K562 (cell line): ENCODE measurements at regions of chr7 and their contacts with region 1.

Region 1: DNA sequence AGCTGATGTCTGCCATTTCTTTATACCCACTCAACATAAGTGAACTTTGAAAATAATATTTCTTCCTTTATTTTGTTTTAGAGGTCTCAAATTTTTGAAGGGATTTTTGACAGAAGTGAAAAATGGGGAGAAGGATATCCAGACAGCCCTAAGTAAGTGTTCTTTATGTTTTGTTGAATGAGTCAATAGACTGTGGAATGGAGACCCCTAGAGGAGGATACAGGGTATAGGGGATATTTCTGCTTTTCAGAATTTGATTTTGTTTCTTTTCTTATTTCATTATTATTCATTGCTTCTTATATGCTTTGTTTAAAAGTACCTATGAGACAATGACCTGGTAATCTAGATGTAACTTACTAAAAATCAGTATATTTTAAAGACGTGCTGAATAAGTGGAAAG is 34.4 kb downstream of the PLEKHA8 start:
- DNase-seq: peak; percentile 52 to 57 (median 56)
- ATAC-seq: peak; percentile 93
- H3K4me3 ChIP-seq: no peak overlapping the region
- H3K27ac ChIP-seq: no peak overlapping the region
- H3K4me1 ChIP-seq: no peaks in the 10 kb centered on the region
- H3K27me3 ChIP-seq: no peaks in the 10 kb centered on the region
- CTCF ChIP-seq: peak; percentile 44 to 85 (median 52); a peak in 4 of 6 replicates
- EP300 ChIP-seq: no peak
- POLR2A ChIP-seq: no peak
- RAD21 ChIP-seq: peak; percentile 51 to 83

Region 2: DNA sequence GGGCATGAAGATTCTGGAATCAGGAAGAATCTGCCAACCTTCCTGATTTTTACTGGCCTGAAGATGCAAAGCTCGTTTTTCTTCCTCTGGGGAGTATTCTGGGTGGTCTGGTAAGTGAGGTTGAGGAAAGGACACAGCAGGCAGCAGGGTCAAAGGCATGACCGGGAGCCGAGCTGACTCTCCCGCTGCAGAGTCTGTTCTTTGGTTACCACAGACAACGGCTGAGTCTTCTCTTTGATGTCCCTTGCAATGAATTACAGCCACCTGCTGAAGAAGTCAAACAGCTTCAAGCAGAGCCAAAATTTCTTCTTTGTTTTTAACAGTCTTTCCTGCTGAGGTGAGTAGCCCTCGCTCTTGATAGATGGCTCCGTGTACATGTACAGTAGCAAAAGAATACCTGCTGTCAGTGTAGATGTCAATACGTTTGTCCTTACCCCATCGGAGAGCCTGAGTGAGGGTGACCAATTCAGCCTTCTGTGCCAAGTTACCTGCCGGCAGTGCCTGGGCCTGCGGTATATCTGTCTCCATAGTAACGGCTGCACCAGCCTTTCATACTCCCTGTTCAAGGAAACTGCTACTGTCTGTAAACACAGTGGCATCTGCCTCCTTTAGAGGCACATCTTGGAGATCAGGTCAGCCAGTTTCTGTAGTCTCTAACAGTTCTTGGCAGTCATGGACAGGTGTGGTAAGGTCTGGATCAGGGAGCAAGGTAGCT is 422.6 kb before region 1 on chr7:
- CTCF ChIA-PET with region 1: interaction called, 4 read pairs
- POLR2A ChIA-PET with region 1: no interaction called
- in situ Hi-C with region 1: loop called (anchors 10 kb)
- intact Hi-C with region 1: loop called (anchors 5 kb)
- DNase-seq: no peak
- ATAC-seq: no peak
- H3K4me3 ChIP-seq: no peak overlapping the region
- H3K27ac ChIP-seq: no peak overlapping the region
- H3K4me1 ChIP-seq: peaks cover 0 to 5% of the 10 kb centered on the region in 2 experiments; a peak in 1 of 5 replicates
- H3K27me3 ChIP-seq: no peaks in the 10 kb centered on the region
- CTCF ChIP-seq: no peak
- EP300 ChIP-seq: no peak
- POLR2A ChIP-seq: no peak
- RAD21 ChIP-seq: no peak

Region 3: DNA sequence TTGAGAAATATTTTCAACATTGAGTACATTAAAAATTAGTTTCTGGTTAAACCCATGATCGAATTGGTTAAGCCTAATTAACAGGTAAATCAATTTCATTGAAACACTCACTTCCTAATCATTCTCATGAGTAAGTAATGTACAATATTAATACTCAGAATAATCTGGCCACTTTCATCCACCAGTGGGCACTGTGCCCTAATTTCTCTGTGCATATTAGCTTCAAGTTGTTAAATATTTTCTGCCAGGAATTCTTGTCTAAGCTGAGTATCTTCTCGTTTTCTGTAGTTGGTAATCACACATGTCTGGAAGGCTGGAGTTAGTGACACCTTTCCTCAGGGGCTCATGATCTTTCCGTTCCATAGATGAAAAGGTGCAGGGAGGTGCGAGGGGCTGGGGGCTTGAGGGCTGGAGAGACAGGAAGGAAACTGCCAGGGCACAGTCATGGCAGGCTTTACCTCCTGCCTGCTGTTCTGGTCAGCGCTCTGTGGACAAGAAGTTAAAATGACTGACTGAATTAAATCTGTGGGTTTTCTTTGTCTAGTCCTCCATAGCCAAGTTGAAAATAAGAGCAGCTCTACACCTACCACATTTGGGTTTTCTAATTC is 184.4 kb before region 1 on chr7:
- CTCF ChIA-PET with region 1: interaction called, 3 read pairs
- POLR2A ChIA-PET with region 1: interaction called, 3 read pairs
- in situ Hi-C with region 1: loop called (anchors 10 kb)
- intact Hi-C with region 1: loop called (anchors 5 kb)
- DNase-seq: peak; percentile 20 to 39 (median 30)
- ATAC-seq: peak; percentile 58; the same call in 2 of the 3 replicates
- H3K4me3 ChIP-seq: no peak overlapping the region
- H3K27ac ChIP-seq: no peak overlapping the region
- H3K4me1 ChIP-seq: peaks cover 0 to 3% of the 10 kb centered on the region in 2 experiments; a peak in 1 of 5 replicates
- H3K27me3 ChIP-seq: no peaks in the 10 kb centered on the region
- CTCF ChIP-seq: peak; percentile 46 to 75 (median 50); a peak in 4 of 6 replicates
- EP300 ChIP-seq: no peak
- POLR2A ChIP-seq: no peak
- RAD21 ChIP-seq: peak; percentile 61 to 76

Region 4: GRCh38 chr7:29946428-29947186 is 116.0 kb before region 1 on chr7:
- CTCF ChIA-PET with region 1: no interaction called
- POLR2A ChIA-PET with region 1: interaction called, 3 read pairs
- in situ Hi-C with region 1: no loop called
- intact Hi-C with region 1: loop called (anchors 5 kb)
- DNase-seq: peak in 2 of 4 experiments; percentile 19 to 22
- ATAC-seq: peak; percentile 77
- H3K4me3 ChIP-seq: no peak overlapping the region
- H3K27ac ChIP-seq: no peak overlapping the region
- H3K4me1 ChIP-seq: peaks cover 0 to 7% of the 10 kb centered on the region in 2 experiments; a peak in 1 of 5 replicates
- H3K27me3 ChIP-seq: peaks cover 2 to 23% of the 10 kb centered on the region in 2 experiments; a peak in 4 of 5 replicates
- CTCF ChIP-seq: peak; percentile 44 to 47 (median 47); a peak in 5 of 6 replicates
- EP300 ChIP-seq: no peak
- POLR2A ChIP-seq: no peak
- RAD21 ChIP-seq: peak in 1 of 2 experiments; percentile 52; a peak in 2 of 4 replicates